Prostate gland (tissue), 2 donors: ENCODE measurements at regions of chr17 and their contacts with region 1.

Region 1: DNA sequence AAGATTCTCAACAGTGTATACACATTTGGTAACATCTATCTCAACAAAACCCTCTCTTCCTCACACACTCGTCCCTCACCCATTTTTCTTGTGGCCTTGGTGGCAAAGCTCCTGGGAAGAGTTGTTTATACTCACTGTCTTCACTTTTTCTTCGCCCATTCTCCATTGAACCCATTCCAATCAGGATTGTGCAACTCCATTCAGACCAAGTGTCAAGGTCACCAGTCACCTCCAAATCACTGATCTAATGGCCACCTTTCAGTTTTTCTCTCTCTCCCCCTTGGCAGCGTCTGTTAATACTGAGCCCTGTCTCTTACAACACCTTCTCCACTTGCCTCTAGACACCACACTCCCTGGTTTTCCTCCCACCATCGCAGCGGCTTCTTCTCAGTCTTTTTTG is 8.6 kb upstream of the SLC13A5 start:
- DNase-seq: no peak
- H3K4me3 ChIP-seq: no peak overlapping the region
- H3K27ac ChIP-seq: no peak overlapping the region
- H3K4me1 ChIP-seq: no peaks in the 10 kb centered on the region
- H3K27me3 ChIP-seq: no peaks in the 10 kb centered on the region
- CTCF ChIP-seq: no peak
- POLR2A ChIP-seq: no peak

Region 2: GRCh38 chr17:6761779-6762178 is 40.0 kb after region 1 on chr17:
- intact Hi-C with region 1: no loop called
- DNase-seq: no peak
- H3K4me3 ChIP-seq: no peak overlapping the region
- H3K27ac ChIP-seq: no peak overlapping the region
- H3K4me1 ChIP-seq: no peaks in the 10 kb centered on the region
- H3K27me3 ChIP-seq: no peaks in the 10 kb centered on the region
- CTCF ChIP-seq: no peak
- POLR2A ChIP-seq: no peak

Region 3: DNA sequence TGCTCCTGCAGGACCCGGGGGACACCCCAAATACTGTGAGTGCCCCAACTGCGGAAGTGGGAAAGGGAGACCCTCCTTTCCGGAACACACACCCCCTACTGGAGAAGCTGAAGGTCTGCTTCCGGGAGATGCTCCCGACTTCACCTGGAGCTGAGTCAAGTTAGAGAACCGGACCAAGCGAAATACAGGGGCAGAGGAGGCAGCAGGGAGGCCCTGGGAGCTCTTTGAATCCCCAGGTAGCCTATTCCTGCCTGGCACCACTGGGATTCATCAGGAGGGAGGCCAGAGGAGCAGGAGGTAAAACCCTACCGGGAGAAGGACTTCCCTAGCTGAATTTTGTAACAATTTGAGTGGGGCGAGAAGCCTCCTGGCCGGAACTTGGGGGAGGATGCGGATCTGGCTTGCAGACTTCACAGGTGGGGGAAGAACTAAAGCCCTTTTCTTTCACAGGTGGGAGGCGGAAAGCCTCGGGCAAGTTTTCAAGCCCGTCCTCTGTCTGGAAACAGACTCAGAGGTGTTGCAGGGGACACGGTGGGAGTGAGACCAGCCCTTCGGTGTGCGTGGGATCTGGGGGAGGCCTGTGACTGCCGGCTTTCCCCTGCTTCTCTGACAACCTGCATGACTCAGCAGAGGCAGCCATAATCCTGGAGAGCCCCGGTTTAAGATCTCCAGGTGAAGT is 132.2 kb after region 1 on chr17:
- intact Hi-C with region 1: loop called (anchors 10 kb)
- DNase-seq: no peak
- H3K4me3 ChIP-seq: peak overlapping the region; percentile 22 to 31
- H3K27ac ChIP-seq: peak overlapping the region in 1 of 2 donors; percentile 67
- H3K4me1 ChIP-seq: no peaks in the 10 kb centered on the region
- H3K27me3 ChIP-seq: no peaks in the 10 kb centered on the region
- CTCF ChIP-seq: peak in 2 of 4 experiments; percentile 11 to 22
- POLR2A ChIP-seq: no peak